Ascending aorta (tissue), 2 donors: ENCODE measurements at regions of chrX and their contacts with region 1.

Region 1: DNA sequence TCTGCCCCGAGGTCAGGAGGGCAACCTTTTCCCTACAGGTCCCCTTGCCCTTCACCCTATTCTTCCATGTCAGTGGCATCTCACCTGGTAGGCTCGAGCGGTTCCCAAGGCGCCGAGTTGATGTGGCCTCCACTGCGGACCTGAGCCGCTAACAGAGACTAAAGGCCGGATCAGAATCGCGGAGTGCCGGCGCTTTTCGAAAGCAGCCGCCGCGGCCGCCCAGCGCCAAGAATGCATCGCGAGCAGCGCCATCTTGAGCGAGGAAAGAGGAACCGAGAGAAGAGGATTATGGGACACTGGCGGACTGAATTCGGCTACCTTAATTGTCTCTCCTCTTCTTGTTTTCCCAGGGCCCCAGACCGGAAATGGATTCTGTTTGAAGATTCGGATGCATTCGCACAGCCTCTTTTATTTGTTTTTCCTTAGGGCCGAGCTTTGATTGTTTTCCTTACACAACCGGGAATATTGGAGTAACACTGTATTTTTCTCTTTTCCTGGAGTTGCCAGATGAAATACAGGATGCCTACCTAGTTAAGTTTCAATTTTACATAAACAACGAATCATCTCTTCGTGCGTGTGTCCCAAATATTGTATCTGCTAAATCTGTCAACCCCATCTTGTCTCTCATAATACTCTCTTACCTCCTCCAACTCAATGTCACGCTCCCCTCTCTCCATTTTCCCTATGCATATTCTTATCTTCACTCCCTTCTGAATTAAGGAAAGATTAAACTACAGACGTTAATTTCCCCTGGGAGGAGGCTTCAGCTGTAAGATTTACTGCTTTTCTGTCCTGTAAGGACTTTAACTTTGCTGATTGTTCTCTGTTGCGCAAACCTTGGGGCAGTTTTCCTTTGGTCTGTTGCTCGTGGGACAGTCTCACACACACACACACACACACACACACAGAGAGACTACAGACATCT is at the start of gene ABCB7:
- DNase-seq: peak in 1 of 2 donors; percentile 75
- H3K4me3 ChIP-seq: peak within 1 kb of the TSS; percentile 49 to 69
- H3K27ac ChIP-seq: peak within 1 kb of the TSS; percentile 73 to 81
- H3K4me1 ChIP-seq: no peaks in the 10 kb centered on the region
- H3K27me3 ChIP-seq: no peaks in the 10 kb centered on the region
- CTCF ChIP-seq: peak in 1 of 3 experiments; percentile 41
- total RNA-seq, gene ABCB7: 157 TPM

Region 2: DNA sequence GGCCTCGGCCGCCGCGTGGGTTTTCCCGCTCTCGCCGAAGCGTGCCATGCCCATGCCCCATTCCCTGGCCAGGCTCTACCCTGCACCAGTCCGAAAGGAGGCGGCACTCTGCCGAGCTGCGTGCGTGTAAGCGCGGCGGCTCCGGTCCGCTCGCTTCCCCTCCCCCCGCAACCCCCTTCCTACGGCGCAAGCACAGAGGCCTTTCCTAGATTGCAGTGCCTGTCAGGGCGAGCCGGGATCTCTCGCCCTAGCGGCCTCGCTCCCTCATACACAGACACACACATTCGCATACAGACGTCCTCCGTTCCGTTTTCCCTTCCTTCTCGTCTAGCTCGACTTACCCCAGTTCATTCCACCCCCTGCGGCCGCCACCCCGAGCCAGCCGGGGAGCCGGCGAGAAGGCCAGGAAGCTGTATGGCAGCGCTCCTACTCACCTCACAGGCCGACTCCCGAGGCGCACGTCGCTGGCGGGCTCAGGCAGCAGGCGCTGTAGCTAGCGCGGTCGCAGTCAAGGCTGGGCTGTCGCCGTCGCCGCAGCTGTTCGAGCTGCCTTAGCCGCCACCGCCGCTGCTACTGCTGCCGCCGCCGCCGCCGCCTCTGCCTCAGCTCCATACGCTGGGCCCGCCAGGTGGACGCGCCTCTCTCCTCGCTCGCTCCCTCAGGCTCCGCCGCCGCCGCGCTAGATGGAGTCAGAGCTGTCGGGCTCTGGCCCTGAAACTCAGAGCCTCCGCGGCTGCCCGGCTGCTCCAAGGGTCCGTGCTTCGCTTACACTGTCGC is 231.6 kb before region 1 on chrX:
- intact Hi-C with region 1: loop called (anchors 10 kb)
- DNase-seq: peak in 1 of 2 donors; percentile 68
- H3K4me3 ChIP-seq: peak overlapping the region; percentile 63 to 70
- H3K27ac ChIP-seq: peak overlapping the region; percentile 81 to 85
- H3K4me1 ChIP-seq: no peaks in the 10 kb centered on the region
- H3K27me3 ChIP-seq: no peaks in the 10 kb centered on the region
- CTCF ChIP-seq: no peak

Region 3: DNA sequence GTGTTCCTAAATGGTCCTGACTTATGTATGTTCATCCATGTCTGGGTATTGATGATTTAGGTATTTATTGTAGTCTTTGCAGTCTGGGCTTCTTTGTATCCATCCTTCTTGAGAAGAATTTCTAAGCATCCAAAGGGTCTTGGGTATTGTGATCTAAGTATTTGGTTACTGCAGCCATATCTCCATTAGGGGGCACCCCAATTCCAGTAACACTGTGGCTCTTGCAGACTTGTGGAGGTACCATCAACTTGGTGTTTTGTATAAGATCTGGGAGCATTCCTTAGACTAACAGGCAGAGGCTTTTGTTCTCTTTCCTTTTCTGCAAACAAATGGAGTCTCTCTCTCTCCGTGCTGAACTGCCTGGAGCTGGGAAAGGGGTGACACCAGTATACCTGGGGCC is 117.4 kb before region 1 on chrX:
- intact Hi-C with region 1: no loop called
- DNase-seq: no peak
- H3K4me3 ChIP-seq: no peak overlapping the region
- H3K27ac ChIP-seq: no peak overlapping the region
- H3K4me1 ChIP-seq: no peaks in the 10 kb centered on the region
- H3K27me3 ChIP-seq: no peaks in the 10 kb centered on the region
- CTCF ChIP-seq: no peak

Region 4: GRCh38 chrX:75273483-75273882 is 117.2 kb after region 1 on chrX:
- intact Hi-C with region 1: loop called (anchors 2 kb)
- DNase-seq: no peak
- H3K4me3 ChIP-seq: peak overlapping the region; percentile 64 to 78
- H3K27ac ChIP-seq: peak overlapping the region; percentile 86 to 97
- H3K4me1 ChIP-seq: no peaks in the 10 kb centered on the region
- H3K27me3 ChIP-seq: no peaks in the 10 kb centered on the region
- CTCF ChIP-seq: no peak

Region 5: DNA sequence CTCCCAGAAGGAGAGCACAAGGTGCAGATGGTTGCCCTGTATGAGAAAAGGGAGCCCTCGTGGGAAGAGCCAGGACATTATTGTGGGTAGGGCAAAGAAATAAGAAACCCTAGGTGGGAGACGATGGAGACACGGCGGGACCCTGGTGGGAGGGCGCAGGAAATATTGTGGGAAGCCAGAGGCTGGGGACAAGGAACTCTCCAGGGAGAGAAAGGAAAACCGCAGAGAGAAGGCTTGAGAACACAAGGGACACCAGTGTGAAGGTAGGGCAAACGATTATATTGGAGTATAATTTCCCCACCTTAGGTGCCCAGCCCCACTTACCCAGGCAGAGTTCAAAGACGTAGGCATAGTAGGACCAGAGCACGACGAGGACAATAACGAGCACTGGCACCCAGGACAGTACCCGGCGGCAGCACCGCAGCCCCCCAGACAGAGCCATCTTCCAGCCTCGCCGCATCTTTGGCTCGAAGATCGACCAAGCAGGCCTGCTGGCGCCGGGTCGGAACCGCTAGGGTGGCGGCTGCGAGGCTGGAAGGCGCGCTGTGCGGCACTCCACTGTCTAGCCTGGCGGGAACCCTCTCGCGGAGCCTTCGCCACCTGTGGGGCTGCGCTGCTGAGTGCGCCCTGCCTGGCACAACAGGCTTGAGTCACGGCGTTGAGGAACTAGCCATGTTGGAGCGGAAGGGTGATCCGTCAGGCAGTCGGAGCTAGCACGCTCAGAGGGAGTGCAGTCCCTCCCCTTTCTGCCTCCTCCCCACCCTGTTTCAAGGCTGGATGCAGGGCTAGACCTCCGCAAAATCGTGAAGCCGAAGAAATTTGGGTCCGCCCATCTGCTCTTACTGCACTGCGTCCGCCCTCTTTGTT is 366.5 kb after region 1 on chrX and contains the start of gene ZDHHC15:
- intact Hi-C with region 1: loop called (anchors 10 kb)
- DNase-seq: peak in 1 of 2 donors; percentile 81
- H3K4me3 ChIP-seq: peak within 1 kb of the TSS; percentile 50 to 76
- H3K27ac ChIP-seq: peak within 1 kb of the TSS; percentile 76 to 89
- H3K4me1 ChIP-seq: no peaks in the 10 kb centered on the region
- H3K27me3 ChIP-seq: no peaks in the 10 kb centered on the region
- CTCF ChIP-seq: peak in 1 of 3 experiments; percentile 7
- total RNA-seq, gene ZDHHC15: 6.4 TPM

Region 6: DNA sequence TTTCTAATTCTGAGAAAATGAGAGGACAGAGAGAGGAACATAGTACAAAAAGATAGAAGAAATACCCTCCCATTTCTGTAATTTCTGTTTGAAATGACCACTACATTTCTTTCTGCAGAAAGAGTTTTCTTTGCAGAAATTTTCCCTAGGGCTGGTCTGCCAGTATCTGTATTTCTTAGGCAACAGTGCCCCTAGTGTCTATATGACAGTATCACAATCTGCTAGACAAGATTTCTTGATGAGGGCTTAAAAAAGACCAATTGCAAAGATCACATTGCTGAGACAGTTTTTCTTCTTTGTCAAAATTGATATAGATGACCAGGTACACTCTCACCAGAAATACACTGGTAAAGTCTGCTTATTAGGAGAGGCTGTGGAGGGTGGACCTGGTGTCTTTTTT is 447.6 kb after region 1 on chrX:
- intact Hi-C with region 1: loop called (anchors 10 kb)
- DNase-seq: no peak
- H3K4me3 ChIP-seq: no peak overlapping the region
- H3K27ac ChIP-seq: no peak overlapping the region
- H3K4me1 ChIP-seq: no peaks in the 10 kb centered on the region
- H3K27me3 ChIP-seq: no peaks in the 10 kb centered on the region
- CTCF ChIP-seq: peak; percentile 25 to 75 (median 70)